ENCODE measurements at regions of chr17 and their contacts with region 1.

Region 1: DNA sequence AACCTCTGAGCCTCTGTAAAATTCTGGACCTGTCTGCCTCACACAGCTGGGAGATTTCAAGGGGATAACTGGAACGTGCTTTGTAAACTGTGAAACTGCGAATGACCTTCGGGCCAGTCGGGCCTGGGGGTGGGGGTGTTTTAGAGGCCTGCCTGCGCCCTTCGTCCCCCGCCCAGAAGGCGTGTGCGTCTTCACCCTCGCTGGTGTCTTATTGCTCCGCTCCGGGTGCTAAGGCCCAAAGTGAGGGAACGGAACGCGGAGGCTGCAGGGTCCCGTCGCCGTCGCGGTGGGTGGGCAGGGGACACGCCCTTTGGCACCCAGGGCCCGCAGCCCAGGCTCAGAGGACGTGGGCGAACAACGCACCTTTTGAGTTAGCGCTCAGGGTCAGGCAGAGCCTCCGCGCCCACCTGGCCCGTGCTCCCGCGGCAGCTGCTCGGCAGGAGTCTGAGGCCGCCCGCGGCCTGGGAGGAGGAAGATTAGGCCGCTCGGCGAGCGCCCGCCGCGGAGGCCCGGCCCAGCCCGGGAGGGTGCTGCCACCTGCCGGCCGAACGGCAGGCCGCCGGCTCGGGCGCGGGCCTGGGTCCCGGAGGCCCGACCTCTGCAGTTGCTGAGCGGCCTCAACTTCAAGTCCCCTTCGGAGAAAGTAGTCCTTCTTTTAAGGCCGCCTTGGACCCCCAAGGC is 29.7 kb downstream of the DCAKD start:
- DNase-seq: peak; percentile 72
- H3K4me3 ChIP-seq: peak overlapping the region in 3 of 4 donors; percentile 33 to 51 (median 35)
- H3K27ac ChIP-seq: peak overlapping the region; percentile 76 to 85 (median 83)
- H3K4me1 ChIP-seq: peaks cover 30 to 44% (median 30%) of the 10 kb centered on the region in 4 donors
- H3K27me3 ChIP-seq: peaks cover 8% of the 10 kb centered on the region
- CTCF ChIP-seq: peak in 4 of 5 experiments; percentile 65 to 90 (median 87)
- EP300 ChIP-seq: no peak
- POLR2A ChIP-seq: peak; percentile 33

Region 2: GRCh38 chr17:44941712-44942331 is 79.9 kb before region 1 on chr17:
- in situ Hi-C with region 1: no loop called
- intact Hi-C with region 1: no loop called
- DNase-seq: no peak
- H3K4me3 ChIP-seq: no peak overlapping the region
- H3K27ac ChIP-seq: no peak overlapping the region
- H3K4me1 ChIP-seq: no peaks in the 10 kb centered on the region
- H3K27me3 ChIP-seq: no peaks in the 10 kb centered on the region
- CTCF ChIP-seq: no peak
- EP300 ChIP-seq: no peak
- POLR2A ChIP-seq: no peak

Region 3: DNA sequence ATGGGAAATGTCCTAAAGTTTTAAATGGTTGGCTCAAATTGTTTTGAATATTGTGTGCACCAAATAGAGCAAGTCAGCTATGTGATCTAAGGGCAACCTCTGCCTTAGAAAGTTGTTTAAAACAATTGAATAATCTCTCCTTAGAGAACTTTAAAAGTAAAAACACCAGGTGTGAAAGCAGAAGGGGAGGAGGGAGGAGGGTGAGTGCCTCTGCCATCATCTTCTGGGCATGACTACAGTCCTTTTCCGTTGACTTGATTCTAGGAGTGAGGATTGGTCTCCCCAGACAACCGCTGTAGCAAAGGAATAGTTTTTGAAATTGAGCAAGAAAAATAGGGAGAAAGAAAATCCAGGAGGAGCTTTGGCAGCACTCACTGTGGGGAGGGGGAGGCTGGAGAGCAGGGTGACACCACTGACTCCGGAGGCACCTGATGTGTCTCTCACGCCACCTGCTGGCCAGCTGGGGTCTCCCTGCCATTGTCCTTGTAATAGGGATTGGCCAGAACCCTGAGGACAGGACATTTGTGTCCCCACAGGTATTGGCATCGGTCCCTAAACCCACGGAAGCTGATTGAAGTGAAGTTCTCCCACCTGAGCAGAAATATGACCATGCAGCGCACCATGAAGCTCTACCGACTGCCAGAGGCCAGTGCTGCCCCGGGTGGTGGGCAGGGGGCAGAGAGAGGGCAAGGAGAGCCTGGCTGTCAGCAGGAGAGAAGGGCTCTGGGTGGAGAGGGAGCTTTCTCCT is 77.3 kb after region 1 on chr17:
- in situ Hi-C with region 1: no loop called
- intact Hi-C with region 1: loop called (anchors 5 kb)
- DNase-seq: peak; percentile 93
- H3K4me3 ChIP-seq: no peak overlapping the region
- H3K27ac ChIP-seq: peak overlapping the region; percentile 10 to 81 (median 44)
- H3K4me1 ChIP-seq: peaks cover 7 to 11% (median 9%) of the 10 kb centered on the region in 4 donors
- H3K27me3 ChIP-seq: no peaks in the 10 kb centered on the region
- CTCF ChIP-seq: peak; percentile 85 to 93 (median 90)
- EP300 ChIP-seq: no peak
- POLR2A ChIP-seq: no peak

Measured in transverse colon (tissue), 4 donors.